ENCODE measurements at regions of chr5 and their contacts with region 1.

Region 1: DNA sequence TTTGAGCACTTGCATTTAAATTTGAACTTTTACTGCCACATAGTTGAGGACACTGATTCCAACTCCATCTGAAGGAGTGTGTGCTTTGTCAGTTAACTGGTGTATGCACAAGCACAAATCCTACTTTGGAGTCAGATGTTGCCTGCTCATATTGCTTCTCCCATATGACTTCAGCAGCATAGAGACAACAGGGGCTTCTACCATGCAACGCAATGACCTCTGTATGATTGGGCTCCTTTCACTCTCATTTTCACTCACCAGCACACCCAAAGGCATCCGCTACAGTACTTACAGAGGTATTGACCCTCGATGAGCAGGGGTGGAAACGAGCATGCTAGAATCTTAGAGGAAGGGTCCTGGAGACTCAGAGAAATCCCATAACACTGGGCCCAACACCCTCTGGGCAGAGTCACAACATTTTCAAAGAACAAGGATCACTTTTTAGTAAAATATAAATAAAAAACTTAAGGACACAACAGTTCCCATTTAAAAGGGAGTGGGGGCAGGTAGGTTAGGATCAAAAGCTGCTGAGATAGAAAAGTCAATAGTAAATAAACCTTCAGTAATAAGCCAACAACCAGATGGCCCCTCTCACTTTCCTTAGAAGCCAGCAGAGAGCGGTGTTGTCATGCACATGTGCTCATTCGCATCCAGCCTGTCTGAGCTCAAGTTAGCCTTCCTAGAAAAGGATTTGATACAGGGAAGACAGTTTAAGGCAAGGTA is 203.8 kb downstream of the SNCAIP start:
- DNase-seq: peak; percentile 37
- H3K4me3 ChIP-seq: no peak overlapping the region
- CTCF ChIP-seq: peak; percentile 67

Region 2: GRCh38 chr5:122673343-122673742 is 157.5 kb after region 1 on chr5:
- CTCF ChIA-PET with region 1: no interaction called
- POLR2A ChIA-PET with region 1: no interaction called
- DNase-seq: no peak
- H3K4me3 ChIP-seq: no peak overlapping the region
- CTCF ChIP-seq: no peak

Region 3: GRCh38 chr5:122756263-122756911 is 240.5 kb after region 1 on chr5:
- CTCF ChIA-PET with region 1: no interaction called
- POLR2A ChIA-PET with region 1: no interaction called
- DNase-seq: no peak
- H3K4me3 ChIP-seq: no peak overlapping the region
- CTCF ChIP-seq: no peak

Region 4: GRCh38 chr5:123157791-123158581 is 642.1 kb after region 1 on chr5:
- CTCF ChIA-PET with region 1: interaction called, 18 read pairs
- POLR2A ChIA-PET with region 1: no interaction called
- DNase-seq: peak; percentile 29
- H3K4me3 ChIP-seq: no peak overlapping the region; the same call in none of the 2 replicates
- CTCF ChIP-seq: peak; percentile 39

Region 5: DNA sequence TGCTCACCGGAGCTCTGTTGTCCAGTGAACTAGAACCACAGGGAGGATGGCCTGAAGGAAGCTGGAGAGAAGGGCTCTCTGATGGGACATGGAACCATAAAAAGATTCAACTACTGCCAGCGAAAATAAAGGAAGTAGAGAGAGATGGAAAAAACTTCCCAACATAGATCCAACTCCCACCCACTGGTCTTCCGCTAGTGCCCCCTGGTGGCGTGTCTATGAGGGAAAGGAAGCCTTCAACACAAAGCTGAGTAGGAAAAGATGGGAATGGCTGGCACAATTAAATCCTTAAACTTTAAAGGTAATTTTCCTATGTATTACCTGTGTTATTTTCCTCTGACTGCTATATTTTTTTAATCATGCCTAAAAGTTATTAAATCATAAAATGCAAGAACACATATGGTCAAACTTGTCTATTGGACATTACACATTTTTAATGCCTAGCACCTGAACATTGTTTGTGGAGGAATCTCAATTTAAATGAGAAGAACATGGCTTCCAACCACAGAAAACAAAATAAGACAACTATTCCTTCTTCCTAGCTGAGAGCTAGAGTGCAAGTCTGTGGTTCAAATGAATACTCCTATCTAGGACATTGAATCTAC is 855.8 kb after region 1 on chr5:
- CTCF ChIA-PET with region 1: interaction called, 21 read pairs
- POLR2A ChIA-PET with region 1: no interaction called
- DNase-seq: no peak
- H3K4me3 ChIP-seq: no peak overlapping the region
- CTCF ChIP-seq: peak; percentile 49